ENCODE measurements at regions of chr17 and their contacts with region 1.

Region 1: DNA sequence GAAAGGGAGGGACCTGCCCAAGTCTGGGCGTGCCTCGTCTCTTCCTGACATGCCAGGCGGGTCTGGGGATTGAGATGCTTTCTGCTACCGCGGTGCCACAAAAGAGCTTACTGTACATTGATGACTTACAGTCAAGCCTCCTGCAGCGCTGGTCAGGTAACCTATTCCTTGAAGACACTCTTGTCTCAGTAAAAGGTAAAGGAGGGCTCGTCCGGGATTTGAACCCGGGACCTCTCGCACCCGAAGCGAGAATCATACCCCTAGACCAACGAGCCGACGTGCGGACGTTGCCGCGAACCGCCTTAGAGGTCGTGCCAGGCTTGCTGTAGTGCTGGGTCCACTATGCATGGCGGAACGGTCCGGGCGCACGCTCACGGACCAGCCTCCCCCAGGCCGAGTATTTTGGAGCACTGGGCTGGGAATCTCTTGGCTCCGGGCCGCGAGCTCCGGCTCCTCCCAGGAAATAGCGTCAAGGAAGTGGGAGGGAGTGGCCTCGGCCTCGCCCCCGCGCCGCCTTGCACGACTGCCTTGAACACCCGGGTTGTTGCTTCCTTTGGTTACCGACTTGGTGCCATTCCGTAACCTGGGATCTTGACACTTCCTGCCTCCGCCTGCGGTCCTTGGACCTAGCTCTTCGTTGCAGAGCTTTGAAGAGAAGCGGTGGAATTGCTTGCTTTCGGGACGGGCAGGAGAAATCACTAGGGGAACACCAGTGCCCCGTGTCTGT is 12.4 kb upstream of the AURKB start:
- DNase-seq: peak; percentile 95
- ATAC-seq: peak; percentile 43
- H3K4me3 ChIP-seq: peak overlapping the region; percentile 75 to 100 (median 78)
- H3K4me3 Mint-ChIP-seq: peak overlapping the region; percentile 89
- H3K27ac ChIP-seq: peak overlapping the region; percentile 90 to 93
- H3K27ac Mint-ChIP-seq: peak overlapping the region; percentile 96
- H3K4me1 ChIP-seq: peaks cover 32 to 50% of the 10 kb centered on the region in 2 donors
- H3K4me1 Mint-ChIP-seq: peaks cover 63% of the 10 kb centered on the region
- H3K27me3 ChIP-seq: no peaks in the 10 kb centered on the region
- H3K27me3 Mint-ChIP-seq: no peaks in the 10 kb centered on the region
- CTCF ChIP-seq: no peak

Region 2: DNA sequence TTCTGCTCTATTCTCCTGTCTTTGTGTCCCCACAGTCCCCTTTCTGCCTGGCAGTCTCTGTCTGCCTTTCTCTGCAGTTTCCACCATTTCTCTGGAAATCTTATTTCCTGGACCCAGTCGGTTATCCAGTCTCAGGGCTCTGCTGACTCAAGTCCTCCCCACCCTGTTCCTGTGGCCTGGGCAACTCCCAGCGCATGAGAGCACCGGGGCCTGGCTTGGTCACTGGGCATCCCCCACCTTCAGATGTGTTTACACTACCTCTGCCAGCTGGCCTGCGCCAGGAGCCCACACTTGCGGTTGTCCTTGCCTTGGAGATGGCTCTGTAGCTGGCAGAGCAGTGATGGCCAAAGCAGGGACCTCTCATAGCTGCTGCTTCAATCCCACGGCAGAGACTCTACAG is 203.1 kb before region 1 on chr17:
- CTCF ChIA-PET with region 1: no interaction called
- POLR2A ChIA-PET with region 1: no interaction called
- intact Hi-C with region 1: no loop called
- DNase-seq: no peak
- ATAC-seq: no peak
- H3K4me3 ChIP-seq: no peak overlapping the region
- H3K4me3 Mint-ChIP-seq: no peak overlapping the region
- H3K27ac ChIP-seq: no peak overlapping the region
- H3K27ac Mint-ChIP-seq: no peak overlapping the region
- H3K4me1 ChIP-seq: peaks cover 15 to 16% of the 10 kb centered on the region in 2 donors
- H3K4me1 Mint-ChIP-seq: peaks cover 13% of the 10 kb centered on the region
- H3K27me3 ChIP-seq: peaks cover 0 to 49% (median 20%) of the 10 kb centered on the region in 4 experiments
- H3K27me3 Mint-ChIP-seq: peaks cover 55% of the 10 kb centered on the region
- CTCF ChIP-seq: no peak

Region 3: DNA sequence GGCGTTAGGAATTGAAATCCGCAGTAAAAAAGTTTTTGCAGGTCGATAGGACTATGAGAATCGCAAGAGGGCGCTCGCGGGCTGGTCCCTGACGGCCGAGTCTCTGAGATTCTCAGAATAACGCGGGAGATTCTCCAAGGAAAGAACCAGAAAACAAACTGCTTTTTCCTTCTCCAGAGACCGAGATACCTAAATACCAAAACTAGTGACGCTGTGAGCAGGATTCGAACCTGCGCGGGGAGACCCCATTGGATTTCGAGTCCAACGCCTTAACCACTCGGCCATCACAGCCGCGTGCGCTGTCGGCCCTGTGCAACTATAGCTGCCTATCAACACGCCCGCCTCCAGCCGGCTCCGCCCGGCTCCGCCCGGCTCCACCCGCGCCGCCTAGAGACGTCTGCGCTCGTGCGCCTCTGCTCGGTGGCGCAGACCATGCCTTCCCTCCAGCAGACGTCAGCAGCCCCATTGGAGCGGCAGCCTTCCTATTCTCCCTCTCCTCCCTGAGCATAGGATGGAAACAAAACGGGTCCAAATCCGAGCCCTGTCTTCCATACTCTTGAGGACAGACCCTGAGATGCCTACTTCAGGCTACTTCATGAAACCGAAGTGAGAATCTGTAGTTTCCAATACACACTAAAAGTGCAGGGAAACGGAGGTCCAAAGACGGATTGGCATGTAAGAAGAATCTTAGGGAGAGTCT is 84.0 kb before region 1 on chr17:
- CTCF ChIA-PET with region 1: interaction called, 22 read pairs
- POLR2A ChIA-PET with region 1: interaction called, 11 read pairs
- intact Hi-C with region 1: loop called (anchors 1 kb)
- DNase-seq: peak; percentile 98
- ATAC-seq: peak; percentile 96
- H3K4me3 ChIP-seq: peak overlapping the region; percentile 62 to 84 (median 72)
- H3K4me3 Mint-ChIP-seq: no peak overlapping the region
- H3K27ac ChIP-seq: peak overlapping the region; percentile 84 to 98
- H3K27ac Mint-ChIP-seq: no peak overlapping the region
- H3K4me1 ChIP-seq: peaks cover 10 to 20% of the 10 kb centered on the region in 2 donors
- H3K4me1 Mint-ChIP-seq: peaks cover 2% of the 10 kb centered on the region
- H3K27me3 ChIP-seq: no peaks in the 10 kb centered on the region
- H3K27me3 Mint-ChIP-seq: no peaks in the 10 kb centered on the region
- CTCF ChIP-seq: peak; percentile 94

Region 4: GRCh38 chr17:8189711-8190477 is 32.9 kb before region 1 on chr17 and contains the start of gene BORCS6:
- CTCF ChIA-PET with region 1: interaction called, 86 read pairs
- POLR2A ChIA-PET with region 1: interaction called, 118 read pairs
- intact Hi-C with region 1: loop called (anchors 1 kb)
- DNase-seq: peak; percentile 97
- ATAC-seq: peak; percentile 64
- H3K4me3 ChIP-seq: peak within 1 kb of the TSS; percentile 27 to 97 (median 74)
- H3K4me3 Mint-ChIP-seq: no peak within 1 kb of the TSS
- H3K27ac ChIP-seq: peak within 1 kb of the TSS; percentile 89 to 93
- H3K27ac Mint-ChIP-seq: no peak within 1 kb of the TSS
- H3K4me1 ChIP-seq: peaks cover 36 to 53% of the 10 kb centered on the region in 2 donors
- H3K4me1 Mint-ChIP-seq: peaks cover 11% of the 10 kb centered on the region
- H3K27me3 ChIP-seq: no peaks in the 10 kb centered on the region
- H3K27me3 Mint-ChIP-seq: no peaks in the 10 kb centered on the region
- CTCF ChIP-seq: no peak
- total RNA-seq, gene BORCS6: 18.6 and 20.2 TPM in 2 replicates

Region 5: DNA sequence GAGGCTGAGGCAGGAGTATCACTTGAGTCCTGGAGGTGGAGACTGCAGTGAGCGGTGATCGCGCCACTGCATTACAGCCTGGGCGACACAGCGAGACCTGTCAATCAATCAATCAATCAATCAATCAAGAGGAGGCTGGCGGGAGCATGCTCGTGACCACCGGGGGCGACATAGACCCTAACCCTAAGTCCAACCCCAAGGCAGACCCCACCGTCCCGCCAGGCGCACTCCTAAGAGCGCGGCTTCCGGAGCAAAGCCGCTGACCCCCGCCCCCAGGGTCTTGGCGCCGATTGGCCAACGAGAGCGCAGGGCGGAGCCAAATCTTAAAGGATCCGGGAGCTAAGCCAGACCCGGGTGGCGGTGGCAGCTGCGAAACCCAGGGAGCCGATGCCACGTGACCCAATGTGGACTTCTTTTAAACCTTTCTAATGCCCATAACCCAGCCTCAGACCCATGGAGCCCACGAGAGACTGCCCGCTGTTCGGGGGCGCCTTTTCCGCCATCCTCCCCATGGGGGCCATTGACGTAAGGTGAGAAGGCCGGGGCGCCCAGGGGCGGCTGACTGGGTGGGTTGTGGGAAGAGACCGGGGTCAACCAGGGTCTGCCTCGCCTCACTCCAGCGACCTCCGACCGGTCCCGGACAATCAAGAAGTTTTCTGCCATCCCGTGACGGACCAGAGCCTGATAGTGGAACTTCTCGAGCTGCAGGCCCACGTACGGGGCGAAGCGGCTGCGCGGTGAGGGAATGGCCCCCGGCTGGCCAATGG is 65.7 kb after region 1 on chr17 and contains the start of gene RANGRF:
- CTCF ChIA-PET with region 1: no interaction called
- POLR2A ChIA-PET with region 1: interaction called, 5 read pairs
- intact Hi-C with region 1: loop called (anchors 1 kb)
- DNase-seq: peak; percentile 88
- ATAC-seq: peak; percentile 88
- H3K4me3 ChIP-seq: peak within 1 kb of the TSS; percentile 76 to 98 (median 86)
- H3K4me3 Mint-ChIP-seq: peak within 1 kb of the TSS; percentile 92
- H3K27ac ChIP-seq: peak within 1 kb of the TSS; percentile 92
- H3K27ac Mint-ChIP-seq: peak within 1 kb of the TSS; percentile 98
- H3K4me1 ChIP-seq: peaks cover 22 to 32% of the 10 kb centered on the region in 2 donors
- H3K4me1 Mint-ChIP-seq: peaks cover 51% of the 10 kb centered on the region
- H3K27me3 ChIP-seq: no peaks in the 10 kb centered on the region
- H3K27me3 Mint-ChIP-seq: no peaks in the 10 kb centered on the region
- CTCF ChIP-seq: no peak
- total RNA-seq, gene RANGRF: 46.8 and 48.8 TPM in 2 replicates

Region 6: DNA sequence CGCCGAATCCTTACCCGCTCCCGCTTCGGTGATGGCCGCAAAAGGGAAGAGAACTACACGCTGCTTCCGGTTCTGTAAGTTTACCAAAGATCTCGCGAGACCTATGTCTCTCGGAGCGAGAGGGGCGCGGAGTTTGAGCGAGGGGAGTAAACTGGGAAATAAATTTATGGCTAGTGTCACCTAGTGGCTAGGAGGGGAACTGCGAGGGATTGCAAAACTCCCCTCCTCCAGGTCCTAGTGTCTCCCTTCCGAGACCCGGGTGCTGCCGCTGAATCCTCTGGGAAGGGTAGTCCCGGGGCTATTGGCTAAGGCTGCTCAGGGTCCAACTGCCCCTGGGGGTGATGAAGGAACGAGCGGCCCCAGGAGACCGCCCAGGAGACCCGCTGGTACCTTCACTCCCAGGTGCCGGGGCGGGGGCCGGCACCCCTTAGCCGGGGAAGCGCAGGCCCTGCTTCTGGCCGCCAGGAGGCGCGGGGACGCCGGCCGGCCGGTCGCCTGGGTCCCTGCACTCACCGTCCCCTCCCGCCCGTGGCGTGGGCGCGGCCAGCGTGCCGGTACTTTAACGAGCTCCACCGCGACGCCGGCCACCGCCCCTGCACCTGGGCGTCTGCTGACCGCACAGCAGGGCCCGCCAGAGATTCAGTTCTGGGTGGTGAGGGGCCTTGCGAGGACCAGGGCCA is 160.5 kb after region 1 on chr17 and contains the start of gene RPL26:
- CTCF ChIA-PET with region 1: interaction called, 3 read pairs
- POLR2A ChIA-PET with region 1: no interaction called
- intact Hi-C with region 1: loop called (anchors 1 kb)
- DNase-seq: peak; percentile 98
- ATAC-seq: peak; percentile 89
- H3K4me3 ChIP-seq: peak within 1 kb of the TSS; percentile 73 to 95 (median 84)
- H3K4me3 Mint-ChIP-seq: peak within 1 kb of the TSS; percentile 89
- H3K27ac ChIP-seq: peak within 1 kb of the TSS; percentile 72 to 82
- H3K27ac Mint-ChIP-seq: peak within 1 kb of the TSS; percentile 87
- H3K4me1 ChIP-seq: peaks cover 25 to 36% of the 10 kb centered on the region in 2 donors
- H3K4me1 Mint-ChIP-seq: peaks cover 50% of the 10 kb centered on the region
- H3K27me3 ChIP-seq: no peaks in the 10 kb centered on the region
- H3K27me3 Mint-ChIP-seq: no peaks in the 10 kb centered on the region
- CTCF ChIP-seq: peak; percentile 100
- total RNA-seq, gene RPL26: 2,601 and 2,684 TPM in 2 replicates

Region 7: GRCh38 chr17:8965394-8966168 is 742.8 kb after region 1 on chr17 and contains the start of gene PIK3R5:
- CTCF ChIA-PET with region 1: no interaction called
- POLR2A ChIA-PET with region 1: no interaction called
- intact Hi-C with region 1: no loop called
- DNase-seq: peak; percentile 98
- ATAC-seq: peak; percentile 90
- H3K4me3 ChIP-seq: peak within 1 kb of the TSS; percentile 59 to 93 (median 84)
- H3K4me3 Mint-ChIP-seq: peak within 1 kb of the TSS; percentile 95
- H3K27ac ChIP-seq: peak within 1 kb of the TSS; percentile 93 to 97
- H3K27ac Mint-ChIP-seq: peak within 1 kb of the TSS; percentile 94
- H3K4me1 ChIP-seq: peaks cover 43 to 56% of the 10 kb centered on the region in 2 donors
- H3K4me1 Mint-ChIP-seq: peaks cover 54% of the 10 kb centered on the region
- H3K27me3 ChIP-seq: no peaks in the 10 kb centered on the region
- H3K27me3 Mint-ChIP-seq: no peaks in the 10 kb centered on the region
- CTCF ChIP-seq: peak; percentile 28
- total RNA-seq, gene PIK3R5: 69.9 and 70.0 TPM in 2 replicates

Measured in B cell (primary cell).